ENCODE measurements at regions of chr2 and their contacts with region 1.

Region 1: GRCh38 chr2:113248997-113249770 is 29.5 kb downstream of the PAX8 start:
- DNase-seq: peak; percentile 72
- ATAC-seq: peak; percentile 82
- H3K4me3 ChIP-seq: no peak overlapping the region
- H3K27ac ChIP-seq: no peak overlapping the region
- H3K4me1 ChIP-seq: peaks cover 44% of the 10 kb centered on the region
- H3K27me3 ChIP-seq: no peaks in the 10 kb centered on the region; a peak in 1 of 5 replicates
- CTCF ChIP-seq: peak; percentile 98
- EP300 ChIP-seq: peak in 1 of 2 experiments; percentile 46; a peak in 1 of 4 replicates
- POLR2A ChIP-seq: no peak
- RAD21 ChIP-seq: peak; percentile 97

Region 2: DNA sequence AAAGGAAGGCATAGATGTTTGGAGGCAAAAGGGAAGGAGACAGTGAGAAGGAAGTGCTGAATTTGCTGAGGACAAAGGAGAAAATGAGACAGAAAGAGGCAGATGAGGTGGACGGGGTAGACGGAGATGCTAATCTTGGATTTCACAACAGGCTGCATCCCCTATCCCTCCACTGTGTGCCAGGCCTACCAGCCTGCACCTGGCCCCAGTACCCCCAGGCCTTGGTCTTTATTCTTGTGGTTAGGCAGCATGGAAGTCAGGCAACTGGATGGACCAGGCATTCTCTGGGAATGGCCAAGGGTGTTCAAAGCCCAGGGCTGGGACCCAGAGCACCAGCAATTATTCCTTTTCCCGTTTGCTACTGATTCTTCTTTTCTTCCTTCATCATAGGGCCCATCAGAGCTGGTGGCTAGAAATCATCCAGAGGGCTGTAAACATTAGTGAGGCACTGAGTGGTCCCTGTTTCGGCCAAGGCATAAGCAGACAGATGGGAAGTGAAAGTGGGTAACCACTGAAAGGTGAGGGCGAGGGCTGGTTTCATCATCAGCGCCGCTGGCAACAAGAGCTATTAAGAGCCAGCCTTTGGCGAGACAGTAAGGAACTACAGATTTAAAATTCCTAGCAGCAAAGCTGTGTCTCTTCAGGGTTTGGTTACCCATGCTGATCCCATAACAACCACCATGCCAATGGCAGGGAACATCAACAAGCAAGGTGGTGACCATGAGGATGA is 612.8 kb before region 1 on chr2:
- CTCF ChIA-PET with region 1: no interaction called
- POLR2A ChIA-PET with region 1: no interaction called
- in situ Hi-C with region 1: no loop called
- intact Hi-C with region 1: no loop called
- DNase-seq: no peak
- ATAC-seq: no peak
- H3K4me3 ChIP-seq: no peak overlapping the region
- H3K27ac ChIP-seq: no peak overlapping the region
- H3K4me1 ChIP-seq: peaks cover 78% of the 10 kb centered on the region
- H3K27me3 ChIP-seq: peaks cover 3 to 33% of the 10 kb centered on the region in 2 experiments; a peak in 4 of 5 replicates
- CTCF ChIP-seq: no peak
- EP300 ChIP-seq: no peak
- POLR2A ChIP-seq: no peak
- RAD21 ChIP-seq: no peak

Region 3: GRCh38 chr2:113173542-113174395 is 75.4 kb before region 1 on chr2 and contains the start of gene PSD4:
- CTCF ChIA-PET with region 1: no interaction called
- POLR2A ChIA-PET with region 1: no interaction called
- in situ Hi-C with region 1: no loop called
- intact Hi-C with region 1: no loop called
- DNase-seq: no peak
- ATAC-seq: peak; percentile 74
- H3K4me3 ChIP-seq: peak within 1 kb of the TSS; percentile 32 to 59 (median 42)
- H3K27ac ChIP-seq: no peak within 1 kb of the TSS
- H3K4me1 ChIP-seq: peaks cover 69% of the 10 kb centered on the region
- H3K27me3 ChIP-seq: peaks cover 0 to 4% of the 10 kb centered on the region in 2 experiments; a peak in 2 of 5 replicates
- CTCF ChIP-seq: no peak
- EP300 ChIP-seq: no peak
- POLR2A ChIP-seq: peak; percentile 30 to 68; a peak in 3 of 4 replicates
- RAD21 ChIP-seq: no peak
- total RNA-seq, gene PSD4: 8.6 and 9.4 TPM in 2 replicates

Region 4: GRCh38 chr2:113209011-113209641 is 40.1 kb before region 1 on chr2:
- CTCF ChIA-PET with region 1: interaction called, 26 read pairs
- POLR2A ChIA-PET with region 1: interaction called, 6 read pairs
- in situ Hi-C with region 1: loop called (anchors 5 kb)
- intact Hi-C with region 1: loop called (anchors 1 kb)
- DNase-seq: no peak
- ATAC-seq: no peak
- H3K4me3 ChIP-seq: no peak overlapping the region
- H3K27ac ChIP-seq: no peak overlapping the region
- H3K4me1 ChIP-seq: peaks cover 68% of the 10 kb centered on the region
- H3K27me3 ChIP-seq: no peaks in the 10 kb centered on the region
- CTCF ChIP-seq: no peak
- EP300 ChIP-seq: no peak
- POLR2A ChIP-seq: no peak
- RAD21 ChIP-seq: no peak

Region 5: DNA sequence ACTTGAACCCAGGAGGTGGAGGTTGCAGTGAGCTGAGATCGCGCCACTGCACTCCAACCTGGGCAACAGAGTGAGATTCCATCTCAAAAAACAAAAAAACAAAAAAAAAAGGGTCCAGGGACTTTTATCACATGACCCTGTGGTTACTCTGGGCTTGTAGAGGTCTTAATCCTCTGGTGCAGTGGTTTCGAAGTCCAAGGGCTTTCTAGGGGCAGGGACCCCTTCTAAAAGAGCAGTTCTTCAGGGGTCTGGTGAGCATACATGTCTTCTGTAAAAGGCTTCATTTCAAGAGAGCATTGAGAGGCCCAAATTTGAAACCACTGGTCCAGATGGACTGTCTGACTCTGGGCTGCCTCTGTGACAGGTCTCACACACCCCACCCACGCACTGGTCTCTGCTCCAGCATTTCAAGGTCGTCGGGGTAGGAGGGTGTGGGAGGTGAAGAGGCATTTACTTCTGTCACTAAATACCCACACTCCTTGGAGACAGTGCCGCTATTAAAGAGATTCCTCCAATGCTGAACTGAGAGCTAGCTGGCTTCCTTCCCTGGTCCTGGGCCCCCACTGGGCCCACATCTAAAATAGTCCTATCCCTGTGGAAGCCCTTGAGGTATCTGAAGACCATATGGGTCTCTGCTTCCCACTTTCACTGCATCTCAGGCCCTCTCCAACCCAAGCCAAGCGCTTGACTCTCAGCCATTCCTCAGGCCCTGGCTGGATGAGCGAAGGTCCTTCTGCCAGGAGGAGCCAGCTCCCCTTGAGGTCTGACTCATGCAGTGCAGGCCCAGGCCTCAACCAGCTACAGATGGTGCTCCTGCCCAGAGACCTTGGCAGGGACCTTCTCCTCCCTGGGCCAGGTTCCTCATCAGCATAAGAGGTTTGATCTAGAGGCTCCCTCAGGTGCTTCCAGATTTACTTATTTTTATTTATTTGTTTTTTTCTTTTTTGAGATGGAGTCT is 15.3 kb before region 1 on chr2:
- CTCF ChIA-PET with region 1: no interaction called
- POLR2A ChIA-PET with region 1: interaction called, 10 read pairs
- in situ Hi-C with region 1: no loop called
- intact Hi-C with region 1: no loop called
- DNase-seq: peak; percentile 32
- ATAC-seq: peak; percentile 94
- H3K4me3 ChIP-seq: 0 out of 6 replicates have a peak overlapping the region, but pooled peaks of 2 of the 3 experiments have one; percentile 1 to 17
- H3K27ac ChIP-seq: no peak overlapping the region
- H3K4me1 ChIP-seq: peaks cover 59% of the 10 kb centered on the region
- H3K27me3 ChIP-seq: 0 out of 5 replicates have a peak, but pooled peaks cover 0 to 5% of the 10 kb centered on the region in 2 experiments
- CTCF ChIP-seq: peak; percentile 49
- EP300 ChIP-seq: no peak
- POLR2A ChIP-seq: no peak
- RAD21 ChIP-seq: 0 out of 2 replicates have a peak, but pooled peaks have one; percentile 9

Region 6: DNA sequence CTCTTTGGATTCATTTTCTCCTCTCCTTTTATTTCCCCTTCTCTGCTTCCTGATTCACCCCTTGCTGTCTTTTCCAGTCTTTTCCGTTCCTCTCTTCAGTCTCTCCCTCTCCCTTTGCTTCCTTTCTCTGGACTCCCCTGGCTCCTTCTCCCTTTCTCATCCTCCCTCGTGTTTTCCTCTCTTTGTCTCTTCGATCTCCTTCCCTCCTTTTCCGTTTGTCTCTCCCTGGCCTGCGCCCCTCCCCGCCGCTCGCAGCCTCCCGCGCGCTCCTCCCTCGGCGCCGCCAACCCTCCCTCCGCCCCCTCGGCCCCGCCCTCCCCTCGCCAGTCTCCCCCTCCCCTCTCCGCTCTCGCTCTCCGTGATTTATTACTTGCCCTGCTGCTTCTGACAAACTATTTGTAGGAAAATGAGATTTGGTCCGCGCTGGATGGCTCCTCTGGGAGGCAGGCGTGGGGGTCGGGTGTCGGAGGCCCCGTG is 75.5 kb after region 1 on chr2:
- CTCF ChIA-PET with region 1: interaction called, 4 read pairs
- POLR2A ChIA-PET with region 1: no interaction called
- in situ Hi-C with region 1: no loop called
- intact Hi-C with region 1: loop called (anchors 2 kb)
- DNase-seq: no peak
- ATAC-seq: peak; percentile 82
- H3K4me3 ChIP-seq: peak overlapping the region; percentile 23 to 50 (median 37); a peak in 5 of 6 replicates
- H3K27ac ChIP-seq: no peak overlapping the region
- H3K4me1 ChIP-seq: peaks cover 27% of the 10 kb centered on the region
- H3K27me3 ChIP-seq: peaks cover 0 to 7% of the 10 kb centered on the region in 2 experiments; a peak in 1 of 5 replicates
- CTCF ChIP-seq: no peak
- EP300 ChIP-seq: no peak
- POLR2A ChIP-seq: no peak
- RAD21 ChIP-seq: no peak

Region 7: DNA sequence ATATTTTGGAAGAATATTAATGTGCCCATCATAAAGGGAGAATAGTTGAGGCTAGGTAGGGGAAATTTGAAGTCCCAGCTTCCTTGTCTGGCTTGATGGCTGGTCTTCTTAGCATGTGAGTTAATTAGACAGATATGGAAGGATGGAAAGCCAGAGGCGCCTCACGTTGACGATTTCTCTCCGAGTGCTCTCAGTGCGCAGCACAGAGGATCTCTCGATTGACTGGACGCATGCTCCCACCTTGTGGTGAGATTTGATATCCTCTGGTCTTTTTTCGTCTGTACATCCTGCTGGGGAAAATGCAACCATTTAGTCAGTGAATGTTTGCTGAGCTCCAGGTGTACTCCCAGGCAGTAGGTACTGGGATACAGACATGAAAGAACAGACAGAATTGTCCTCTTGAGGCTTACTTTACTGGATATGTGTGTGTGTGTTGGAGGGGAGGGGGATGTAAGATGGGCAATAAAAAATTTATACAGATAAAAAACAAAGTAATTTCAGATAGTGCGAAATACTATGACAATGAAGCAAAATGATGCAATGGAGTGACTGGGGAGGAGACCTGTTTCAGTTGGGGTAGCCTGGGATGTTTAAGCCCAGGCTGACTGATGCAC is 121.4 kb after region 1 on chr2:
- CTCF ChIA-PET with region 1: interaction called, 66 read pairs
- POLR2A ChIA-PET with region 1: interaction called, 4 read pairs
- in situ Hi-C with region 1: loop called (anchors 25 kb)
- intact Hi-C with region 1: loop called (anchors 1 kb)
- DNase-seq: peak; percentile 80
- ATAC-seq: peak; percentile 99
- H3K4me3 ChIP-seq: no peak overlapping the region
- H3K27ac ChIP-seq: no peak overlapping the region
- H3K4me1 ChIP-seq: peaks cover 8% of the 10 kb centered on the region
- H3K27me3 ChIP-seq: no peaks in the 10 kb centered on the region
- CTCF ChIP-seq: peak; percentile 94
- EP300 ChIP-seq: no peak
- POLR2A ChIP-seq: no peak
- RAD21 ChIP-seq: peak; percentile 95

Region 8: GRCh38 chr2:113390124-113390849 is 141.1 kb after region 1 on chr2:
- CTCF ChIA-PET with region 1: interaction called, 28 read pairs
- POLR2A ChIA-PET with region 1: no interaction called
- in situ Hi-C with region 1: no loop called
- intact Hi-C with region 1: loop called (anchors 2 kb)
- DNase-seq: peak; percentile 79
- ATAC-seq: peak; percentile 83
- H3K4me3 ChIP-seq: no peak overlapping the region
- H3K27ac ChIP-seq: no peak overlapping the region
- H3K4me1 ChIP-seq: no peaks in the 10 kb centered on the region
- H3K27me3 ChIP-seq: no peaks in the 10 kb centered on the region
- CTCF ChIP-seq: peak; percentile 96
- EP300 ChIP-seq: no peak
- POLR2A ChIP-seq: no peak
- RAD21 ChIP-seq: peak; percentile 86

Measured in HepG2 (cell line).